Endothelial cell of umbilical vein (primary cell): ENCODE measurements at regions of chr11 and their contacts with region 1.

Region 1: DNA sequence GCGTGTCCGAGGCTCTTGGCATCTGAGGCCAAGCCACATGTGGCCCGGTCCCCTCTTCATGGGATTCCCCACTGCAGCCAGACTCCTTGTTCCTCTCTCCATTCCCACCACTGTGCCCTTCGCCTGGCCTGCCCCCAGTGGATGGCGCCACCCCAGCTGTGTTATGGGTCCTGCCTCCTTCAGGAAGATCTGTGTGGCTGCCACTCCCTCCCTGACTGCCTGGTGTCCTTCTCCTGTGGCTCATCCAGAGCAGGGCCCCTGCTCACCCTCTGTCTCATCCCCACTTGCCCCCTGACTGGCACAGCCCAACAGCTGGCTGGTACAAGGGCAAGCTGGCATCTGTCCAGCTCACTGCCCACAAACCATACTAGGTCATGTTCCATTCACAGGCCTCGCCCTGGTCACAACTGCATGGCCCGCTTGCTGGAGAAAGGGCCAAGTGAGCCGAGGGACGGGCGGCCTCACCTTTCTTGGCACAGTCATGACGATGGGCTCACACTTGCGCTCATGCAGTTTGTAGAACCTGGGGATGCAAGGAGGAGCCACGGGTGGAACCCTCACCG is 1.9 kb upstream of the PTPRCAP start:
- DNase-seq: peak; percentile 8
- H3K4me3 ChIP-seq: no peak overlapping the region
- H3K27ac ChIP-seq: no peak overlapping the region
- H3K4me1 ChIP-seq: peaks cover 6% of the 10 kb centered on the region
- H3K27me3 ChIP-seq: no peaks in the 10 kb centered on the region
- CTCF ChIP-seq: peak in 1 of 2 donors; percentile 13
- POLR2A ChIP-seq: peak; percentile 13

Region 2: DNA sequence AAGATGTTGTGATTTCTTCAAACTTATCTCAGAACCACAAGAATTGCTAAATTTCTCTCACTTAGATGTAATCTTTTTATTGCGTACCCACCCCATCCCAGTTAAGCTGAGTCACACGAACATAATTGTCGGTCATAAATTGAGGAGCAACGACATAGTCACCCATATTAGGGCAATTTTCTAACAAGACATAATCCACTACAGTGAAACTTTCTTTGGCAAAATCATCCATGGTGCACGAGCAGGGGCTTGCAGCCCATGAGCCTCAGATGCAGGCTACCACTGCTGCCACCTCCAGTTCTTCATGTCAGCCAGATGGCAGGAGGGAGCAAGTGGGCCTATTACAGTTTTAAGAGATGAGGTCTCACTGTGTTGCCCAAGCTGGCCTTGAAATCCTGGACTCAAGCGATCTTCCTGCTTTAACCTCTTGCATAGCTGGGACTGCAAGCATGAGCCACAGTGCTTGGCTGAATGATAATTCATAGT is 243.4 kb before region 1 on chr11:
- CTCF ChIA-PET with region 1: no interaction called
- POLR2A ChIA-PET with region 1: no interaction called
- dilution Hi-C with region 1: no loop called
- intact Hi-C with region 1: no loop called
- DNase-seq: no peak
- H3K4me3 ChIP-seq: no peak overlapping the region
- H3K27ac ChIP-seq: no peak overlapping the region
- H3K4me1 ChIP-seq: no peaks in the 10 kb centered on the region
- H3K27me3 ChIP-seq: no peaks in the 10 kb centered on the region
- CTCF ChIP-seq: no peak
- POLR2A ChIP-seq: no peak

Region 3: DNA sequence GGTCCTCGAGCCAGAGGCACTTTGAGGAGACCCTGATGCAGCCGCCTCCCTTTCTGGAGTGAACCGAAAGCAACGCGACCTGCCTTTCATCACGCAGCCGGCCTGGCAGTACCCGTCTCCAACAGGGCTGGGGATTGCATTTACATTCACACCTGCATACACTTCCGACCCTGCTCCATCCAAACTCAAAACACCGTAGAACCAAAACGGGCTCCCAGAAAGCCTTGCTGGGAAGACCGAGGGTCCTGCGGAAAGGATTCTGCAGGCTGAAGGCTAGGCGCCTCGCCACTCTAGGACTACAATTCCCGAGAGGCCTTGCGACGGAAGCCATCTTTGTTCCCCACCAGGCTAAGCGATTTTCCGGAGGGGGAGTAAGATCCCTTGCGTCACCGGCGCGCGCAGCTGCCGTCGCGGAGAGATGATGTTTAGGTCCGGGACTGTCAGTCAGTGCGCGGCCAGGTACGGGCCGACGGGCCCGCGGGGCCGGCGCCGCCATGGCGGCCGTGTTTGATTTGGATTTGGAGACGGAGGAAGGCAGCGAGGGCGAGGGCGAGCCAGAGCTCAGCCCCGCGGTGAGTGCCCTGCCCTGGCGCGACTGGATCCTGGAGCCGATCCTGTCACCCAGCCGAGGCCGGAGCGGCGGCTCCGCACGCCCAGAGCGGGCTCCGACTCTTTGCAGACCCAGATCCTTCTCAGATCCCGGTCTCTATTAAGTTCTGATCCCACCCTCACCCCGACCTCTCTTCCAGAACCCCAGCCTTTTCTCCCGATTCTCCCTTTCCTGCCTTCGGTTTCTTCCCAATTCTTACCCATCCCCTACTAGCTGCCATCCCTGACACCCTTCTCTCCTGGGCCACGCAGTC is 11.1 kb before region 1 on chr11 and contains the start of gene RPS6KB2:
- CTCF ChIA-PET with region 1: no interaction called
- POLR2A ChIA-PET with region 1: no interaction called
- dilution Hi-C with region 1: no loop called
- intact Hi-C with region 1: loop called (anchors 1 kb)
- DNase-seq: peak; percentile 98
- H3K4me3 ChIP-seq: peak within 1 kb of the TSS; percentile 46 to 91 (median 75)
- H3K27ac ChIP-seq: peak within 1 kb of the TSS; percentile 38
- H3K4me1 ChIP-seq: no peaks in the 10 kb centered on the region
- H3K27me3 ChIP-seq: no peaks in the 10 kb centered on the region
- CTCF ChIP-seq: no peak
- POLR2A ChIP-seq: peak; percentile 96
- total RNA-seq, gene RPS6KB2: 47.8 and 53.8 TPM in 2 replicates

Region 4: DNA sequence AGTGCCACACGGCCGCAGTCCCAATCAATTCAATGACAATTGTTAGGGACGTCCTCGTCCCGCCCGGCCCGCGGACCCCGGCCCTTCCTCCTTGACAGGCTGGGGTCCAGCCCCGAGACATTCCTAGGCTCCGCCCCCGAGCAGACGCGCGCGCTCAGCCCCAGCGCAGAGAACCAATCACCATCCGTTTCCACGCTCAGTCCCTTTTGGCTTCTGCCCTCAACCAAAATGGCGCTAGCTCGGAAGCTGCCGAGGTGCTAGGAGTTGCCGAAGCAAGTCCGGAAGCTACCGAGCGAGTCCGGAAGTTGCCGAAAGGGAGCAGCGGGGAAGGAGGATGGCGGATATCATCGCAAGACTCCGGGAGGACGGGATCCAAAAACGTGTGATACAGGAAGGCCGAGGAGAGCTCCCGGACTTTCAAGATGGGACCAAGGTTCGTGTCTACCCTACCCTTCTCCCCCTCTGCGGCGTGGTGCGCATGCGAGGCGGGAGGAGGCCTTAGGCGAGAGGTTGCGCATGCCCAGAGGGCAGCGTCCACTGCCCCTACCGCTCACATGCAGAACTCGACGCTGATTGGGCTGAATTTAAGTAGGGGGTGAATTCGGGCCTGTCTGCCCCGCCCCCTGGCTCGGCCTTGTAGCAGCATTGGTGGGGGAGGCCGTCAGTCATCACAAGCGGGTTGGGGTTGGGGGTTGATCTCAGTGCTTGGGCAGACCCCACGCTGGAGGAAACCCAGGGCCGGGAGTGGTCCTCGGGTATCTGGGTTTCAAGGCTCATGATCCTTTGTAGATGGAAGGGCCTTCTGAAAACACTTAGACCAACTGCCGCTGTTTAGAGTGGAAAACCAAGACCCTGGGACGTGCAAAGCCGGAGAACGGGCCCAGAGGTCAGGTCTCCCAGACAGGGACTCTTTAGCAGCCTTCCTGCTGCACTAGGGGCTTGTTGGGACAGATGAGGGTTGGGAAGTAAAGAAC is 43.7 kb after region 1 on chr11 and contains the start of gene AIP:
- CTCF ChIA-PET with region 1: no interaction called
- POLR2A ChIA-PET with region 1: no interaction called
- dilution Hi-C with region 1: no loop called
- intact Hi-C with region 1: loop called (anchors 1 kb)
- DNase-seq: peak; percentile 98
- H3K4me3 ChIP-seq: peak within 1 kb of the TSS; percentile 29 to 72 (median 46)
- H3K27ac ChIP-seq: peak within 1 kb of the TSS; percentile 40
- H3K4me1 ChIP-seq: no peaks in the 10 kb centered on the region
- H3K27me3 ChIP-seq: no peaks in the 10 kb centered on the region
- CTCF ChIP-seq: peak in 1 of 2 donors; percentile 7
- POLR2A ChIP-seq: peak; percentile 73
- total RNA-seq, gene AIP: 46.3 and 46.5 TPM in 2 replicates

Region 5: GRCh38 chr11:67498544-67498972 is 59.2 kb after region 1 on chr11:
- CTCF ChIA-PET with region 1: no interaction called
- POLR2A ChIA-PET with region 1: no interaction called
- dilution Hi-C with region 1: no loop called
- intact Hi-C with region 1: no loop called
- DNase-seq: no peak
- H3K4me3 ChIP-seq: no peak overlapping the region
- H3K27ac ChIP-seq: no peak overlapping the region
- H3K4me1 ChIP-seq: no peaks in the 10 kb centered on the region
- H3K27me3 ChIP-seq: no peaks in the 10 kb centered on the region
- CTCF ChIP-seq: no peak
- POLR2A ChIP-seq: no peak